Mammary epithelial cell (primary cell): ENCODE measurements at regions of chr4 and their contacts with region 1.

Region 1: GRCh38 chr4:181939199-181939945 is 303.8 kb upstream of the TENM3 start:
- DNase-seq: peak; percentile 59
- H3K4me3 ChIP-seq: peak overlapping the region in 1 of 3 experiments; percentile 26
- H3K27ac ChIP-seq: peak overlapping the region; percentile 25
- H3K4me1 ChIP-seq: peaks cover 4% of the 10 kb centered on the region
- H3K27me3 ChIP-seq: no peaks in the 10 kb centered on the region
- CTCF ChIP-seq: peak; percentile 46 to 63

Region 2: DNA sequence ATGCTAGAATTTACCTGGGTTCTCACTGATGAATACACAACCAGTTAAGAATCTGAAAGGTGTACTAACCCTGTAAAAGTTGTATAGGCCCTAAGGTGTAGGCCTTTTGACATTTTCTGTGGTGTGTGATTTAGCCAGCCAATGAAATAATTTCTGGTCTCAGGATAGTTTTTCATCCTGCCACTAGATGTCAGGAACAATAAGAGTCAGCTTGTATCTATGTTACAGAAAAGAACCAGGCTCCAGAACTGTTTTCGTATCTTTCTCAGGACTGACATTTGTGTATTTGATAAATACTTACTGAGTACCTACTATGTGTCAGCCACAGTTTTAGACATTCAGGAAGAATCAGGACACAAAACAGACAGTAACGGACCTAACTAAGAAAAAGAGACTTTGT is 369.8 kb before region 1 on chr4:
- CTCF ChIA-PET with region 1: no interaction called
- dilution Hi-C with region 1: no loop called
- in situ Hi-C with region 1: no loop called
- intact Hi-C with region 1: loop called (anchors 2 kb)
- DNase-seq: peak; percentile 46
- H3K4me3 ChIP-seq: no peak overlapping the region
- H3K27ac ChIP-seq: no peak overlapping the region
- H3K4me1 ChIP-seq: no peaks in the 10 kb centered on the region
- H3K27me3 ChIP-seq: no peaks in the 10 kb centered on the region
- CTCF ChIP-seq: peak; percentile 57 to 71

Region 3: GRCh38 chr4:181982437-181982836 is 43.1 kb after region 1 on chr4:
- CTCF ChIA-PET with region 1: no interaction called
- dilution Hi-C with region 1: no loop called
- in situ Hi-C with region 1: no loop called
- intact Hi-C with region 1: no loop called
- DNase-seq: no peak
- H3K4me3 ChIP-seq: no peak overlapping the region
- H3K27ac ChIP-seq: no peak overlapping the region
- H3K4me1 ChIP-seq: no peaks in the 10 kb centered on the region
- H3K27me3 ChIP-seq: no peaks in the 10 kb centered on the region
- CTCF ChIP-seq: no peak

Region 4: GRCh38 chr4:182089326-182089725 is 150.0 kb after region 1 on chr4:
- CTCF ChIA-PET with region 1: interaction called, 6 read pairs
- dilution Hi-C with region 1: no loop called
- in situ Hi-C with region 1: no loop called
- intact Hi-C with region 1: loop called (anchors 5 kb)
- DNase-seq: no peak
- H3K4me3 ChIP-seq: no peak overlapping the region
- H3K27ac ChIP-seq: no peak overlapping the region
- H3K4me1 ChIP-seq: no peaks in the 10 kb centered on the region
- H3K27me3 ChIP-seq: no peaks in the 10 kb centered on the region
- CTCF ChIP-seq: peak; percentile 13 to 27